A549 (cell line): ENCODE measurements at regions of chr2 and their contacts with region 1.

Region 1: DNA sequence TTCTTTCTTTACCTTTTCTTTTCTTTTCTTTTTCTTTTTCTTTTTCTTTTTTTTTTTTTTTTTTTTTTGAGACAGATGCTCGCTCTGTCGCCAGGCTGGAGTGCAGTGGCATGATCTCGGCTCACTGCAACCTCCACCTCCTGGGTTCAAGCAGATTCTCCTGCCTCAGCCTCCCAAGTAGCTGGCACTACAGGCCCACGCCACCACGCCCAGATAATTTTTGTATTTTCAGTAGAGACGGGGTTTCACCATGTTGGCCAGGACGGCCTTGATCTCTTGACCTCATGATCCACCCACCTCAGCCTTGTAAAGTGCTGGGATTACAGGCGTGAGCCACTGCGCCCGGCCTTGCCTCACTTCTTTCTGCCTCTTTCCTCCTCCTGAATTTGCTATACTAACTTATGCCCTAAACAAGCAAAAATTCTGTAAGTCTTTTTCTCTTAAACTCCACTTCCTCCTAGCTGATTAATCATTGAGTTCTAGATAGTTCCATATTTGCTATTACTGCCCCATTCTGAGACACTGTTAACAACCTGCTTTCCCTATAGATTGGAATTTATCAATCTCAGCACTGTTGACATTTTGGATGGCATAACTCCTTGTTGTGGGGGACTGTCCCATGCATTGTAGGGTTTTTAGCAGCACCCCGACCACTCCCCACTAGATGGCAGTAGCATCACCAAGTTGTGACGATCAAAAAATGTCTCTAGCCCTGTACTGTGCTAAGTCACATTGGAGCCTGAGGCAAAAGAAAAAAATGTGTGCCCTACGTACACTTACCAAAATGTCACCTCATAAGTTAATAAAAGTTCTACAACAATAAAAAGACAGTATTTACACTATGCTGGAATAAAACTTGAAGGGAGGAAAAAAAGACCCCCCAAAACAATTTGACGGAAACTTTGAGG is 16.4 kb upstream of the THADA start:
- DNase-seq: peak; percentile 58 to 82
- ATAC-seq: peak; percentile 89 to 94
- H3K4me3 ChIP-seq: no peak overlapping the region
- H3K27ac ChIP-seq: peak overlapping the region; percentile 45 to 55; a peak in 5 of 6 replicates
- H3K4me1 ChIP-seq: peaks cover 6% of the 10 kb centered on the region; the same call in 1 of the 3 replicates
- CTCF ChIP-seq: peak; percentile 95
- EP300 ChIP-seq: no peak
- POLR2A ChIP-seq: no peak
- RAD21 ChIP-seq: peak; percentile 89 to 91

Region 2: GRCh38 chr2:43622931-43623451 is 10.8 kb after region 1 on chr2:
- CTCF ChIA-PET with region 1: interaction called, 23 read pairs
- POLR2A ChIA-PET with region 1: no interaction called
- DNase-seq: no peak
- ATAC-seq: peak in 1 of 2 experiments; percentile 38; a peak in 3 of 6 replicates
- H3K4me3 ChIP-seq: no peak overlapping the region
- H3K27ac ChIP-seq: no peak overlapping the region
- H3K4me1 ChIP-seq: no peaks in the 10 kb centered on the region
- CTCF ChIP-seq: no peak
- EP300 ChIP-seq: no peak
- POLR2A ChIP-seq: no peak
- RAD21 ChIP-seq: no peak

Region 3: GRCh38 chr2:43657241-43657640 is 45.0 kb after region 1 on chr2:
- CTCF ChIA-PET with region 1: interaction called, 10 read pairs
- POLR2A ChIA-PET with region 1: no interaction called
- DNase-seq: no peak
- ATAC-seq: no peak; a peak in 1 of 6 replicates
- H3K4me3 ChIP-seq: no peak overlapping the region
- H3K27ac ChIP-seq: no peak overlapping the region
- H3K4me1 ChIP-seq: no peaks in the 10 kb centered on the region
- CTCF ChIP-seq: no peak
- EP300 ChIP-seq: no peak
- POLR2A ChIP-seq: no peak
- RAD21 ChIP-seq: no peak

Region 4: GRCh38 chr2:43877782-43878464 is 265.7 kb after region 1 on chr2:
- CTCF ChIA-PET with region 1: interaction called, 15 read pairs
- POLR2A ChIA-PET with region 1: no interaction called
- DNase-seq: peak; percentile 73 to 85
- ATAC-seq: peak; percentile 72 to 85
- H3K4me3 ChIP-seq: no peak overlapping the region
- H3K27ac ChIP-seq: no peak overlapping the region
- H3K4me1 ChIP-seq: peaks cover 16% of the 10 kb centered on the region
- CTCF ChIP-seq: peak; percentile 93
- EP300 ChIP-seq: no peak
- POLR2A ChIP-seq: no peak
- RAD21 ChIP-seq: peak; percentile 91 to 96